ENCODE measurements at regions of chr1 and their contacts with region 1.

Region 1: GRCh38 chr1:1441002-1441888 is 5.8 kb downstream of the VWA1 start:
- DNase-seq: peak; percentile 37 to 48 (median 43)
- H3K4me3 ChIP-seq: no peak overlapping the region
- H3K4me3 Mint-ChIP-seq: no peak overlapping the region
- H3K27ac ChIP-seq: no peak overlapping the region
- H3K27ac Mint-ChIP-seq: no peak overlapping the region
- H3K4me1 ChIP-seq: peaks cover 3% of the 10 kb centered on the region
- H3K4me1 Mint-ChIP-seq: peaks cover 0 to 4% (median under 1%) of the 10 kb centered on the region in 4 donors
- H3K27me3 ChIP-seq: peaks cover 8% of the 10 kb centered on the region
- H3K27me3 Mint-ChIP-seq: peaks cover 0 to 8% of the 10 kb centered on the region in 2 donors

Region 2: DNA sequence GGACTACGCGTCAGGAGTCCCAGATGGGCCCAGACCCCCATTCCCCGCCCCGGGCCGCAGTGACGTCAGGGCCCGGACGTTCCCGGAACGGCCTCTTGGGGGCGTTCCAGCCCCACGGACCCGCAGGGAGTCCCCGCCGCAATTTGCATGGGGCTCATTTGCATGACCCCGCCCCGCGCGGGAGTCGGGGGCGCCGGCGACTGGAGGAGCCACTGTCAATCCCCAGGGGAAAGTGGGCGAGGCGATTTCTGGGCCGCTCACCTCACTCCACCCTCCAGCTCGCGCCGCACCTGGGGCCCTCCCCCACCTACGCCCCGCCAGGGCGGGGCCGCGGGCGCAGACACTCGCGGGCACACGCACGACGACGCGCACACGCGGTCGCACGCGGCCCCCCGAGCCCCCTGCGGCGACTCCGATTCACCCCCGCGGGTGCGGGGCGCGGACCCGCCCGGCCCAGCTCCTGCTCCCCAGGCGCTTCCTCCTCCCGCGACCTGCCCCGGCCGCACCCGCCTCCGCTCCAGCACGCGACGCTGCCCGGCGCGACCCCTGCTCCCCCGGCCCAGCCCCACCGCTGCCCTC is 408.1 kb before region 1 on chr1:
- CTCF ChIA-PET with region 1: no interaction called
- POLR2A ChIA-PET with region 1: no interaction called
- intact Hi-C with region 1: loop called (anchors 2 kb)
- DNase-seq: peak; percentile 70 to 88 (median 74)
- H3K4me3 ChIP-seq: peak overlapping the region in 1 of 2 donors; percentile 38
- H3K4me3 Mint-ChIP-seq: peak overlapping the region in 6 of 8 donors; percentile 41 to 70 (median 61)
- H3K27ac ChIP-seq: no peak overlapping the region
- H3K27ac Mint-ChIP-seq: no peak overlapping the region
- H3K4me1 ChIP-seq: peaks cover 12% of the 10 kb centered on the region
- H3K4me1 Mint-ChIP-seq: peaks cover 0 to 8% (median 3%) of the 10 kb centered on the region in 4 donors
- H3K27me3 ChIP-seq: peaks cover 12% of the 10 kb centered on the region
- H3K27me3 Mint-ChIP-seq: peaks cover 13 to 16% of the 10 kb centered on the region in 2 donors

Region 3: GRCh38 chr1:1462318-1462966 is 21.2 kb after region 1 on chr1:
- CTCF ChIA-PET with region 1: no interaction called
- POLR2A ChIA-PET with region 1: no interaction called
- intact Hi-C with region 1: no loop called
- DNase-seq: peak in 1 of 5 donors; percentile 48
- H3K4me3 ChIP-seq: no peak overlapping the region
- H3K4me3 Mint-ChIP-seq: peak overlapping the region; percentile 9 to 80 (median 58)
- H3K27ac ChIP-seq: no peak overlapping the region
- H3K27ac Mint-ChIP-seq: peak overlapping the region in 3 of 7 donors; percentile 15 to 63 (median 35)
- H3K4me1 ChIP-seq: no peaks in the 10 kb centered on the region
- H3K4me1 Mint-ChIP-seq: no peaks in the 10 kb centered on the region
- H3K27me3 ChIP-seq: no peaks in the 10 kb centered on the region
- H3K27me3 Mint-ChIP-seq: peaks cover 0 to 2% of the 10 kb centered on the region in 2 donors

Measured in CD4-positive, alpha-beta memory T cell (primary cell).